BJ (cell line): ENCODE measurements at regions of chr3 and their contacts with region 1.

Region 1: GRCh38 chr3:179551349-179552105 is 11.2 kb upstream of the ACTL6A start:
- DNase-seq: no peak
- H3K4me3 ChIP-seq: no peak overlapping the region
- H3K27me3 ChIP-seq: no peaks in the 10 kb centered on the region
- CTCF ChIP-seq: no peak

Region 2: GRCh38 chr3:179432021-179432420 is 119.5 kb before region 1 on chr3:
- CTCF ChIA-PET with region 1: no interaction called
- POLR2A ChIA-PET with region 1: interaction called, 18 read pairs
- DNase-seq: no peak
- H3K4me3 ChIP-seq: no peak overlapping the region
- H3K27me3 ChIP-seq: no peaks in the 10 kb centered on the region
- CTCF ChIP-seq: no peak